ENCODE measurements at regions of chr9 and their contacts with region 1.

Region 1: GRCh38 chr9:17063535-17064135 is 71.2 kb upstream of the CNTLN start:
- DNase-seq: peak; percentile 61
- H3K4me3 ChIP-seq: no peak overlapping the region
- H3K27ac ChIP-seq: no peak overlapping the region
- H3K4me1 ChIP-seq: peaks cover 15% of the 10 kb centered on the region
- H3K27me3 ChIP-seq: no peaks in the 10 kb centered on the region
- CTCF ChIP-seq: peak; percentile 65 to 72
- POLR2A ChIP-seq: no peak

Region 2: GRCh38 chr9:17052626-17053025 is 11.0 kb before region 1 on chr9:
- CTCF ChIA-PET with region 1: interaction called, 16 read pairs
- POLR2A ChIA-PET with region 1: no interaction called
- dilution Hi-C with region 1: no loop called
- intact Hi-C with region 1: no loop called
- DNase-seq: no peak
- H3K4me3 ChIP-seq: no peak overlapping the region
- H3K27ac ChIP-seq: no peak overlapping the region
- H3K4me1 ChIP-seq: no peaks in the 10 kb centered on the region
- H3K27me3 ChIP-seq: no peaks in the 10 kb centered on the region
- CTCF ChIP-seq: no peak
- POLR2A ChIP-seq: no peak

Region 3: DNA sequence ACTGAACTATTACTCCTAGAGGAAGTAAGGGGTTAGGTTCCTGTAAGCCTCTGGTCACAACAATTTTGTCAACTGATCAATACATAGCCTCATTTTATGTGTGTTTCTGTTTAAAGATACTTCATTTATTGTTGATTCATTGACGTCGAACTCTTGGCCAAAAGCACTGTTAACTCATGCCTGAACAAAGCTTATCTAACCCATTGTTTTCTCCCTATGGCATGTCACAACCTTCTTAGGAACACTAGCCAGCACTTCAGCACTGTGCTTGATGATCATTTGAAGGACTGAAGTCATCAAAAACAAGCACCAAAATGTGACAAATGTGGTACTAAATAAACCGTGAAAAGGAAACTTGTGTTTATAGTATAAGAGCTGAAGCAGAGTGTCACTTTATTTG is 84.7 kb after region 1 on chr9:
- CTCF ChIA-PET with region 1: no interaction called
- POLR2A ChIA-PET with region 1: no interaction called
- dilution Hi-C with region 1: no loop called
- intact Hi-C with region 1: no loop called
- DNase-seq: no peak
- H3K4me3 ChIP-seq: no peak overlapping the region
- H3K27ac ChIP-seq: no peak overlapping the region
- H3K4me1 ChIP-seq: no peaks in the 10 kb centered on the region
- H3K27me3 ChIP-seq: no peaks in the 10 kb centered on the region
- CTCF ChIP-seq: no peak
- POLR2A ChIP-seq: no peak

Region 4: GRCh38 chr9:17291766-17292165 is 228.1 kb after region 1 on chr9:
- CTCF ChIA-PET with region 1: no interaction called
- POLR2A ChIA-PET with region 1: no interaction called
- dilution Hi-C with region 1: no loop called
- intact Hi-C with region 1: no loop called
- DNase-seq: no peak
- H3K4me3 ChIP-seq: no peak overlapping the region
- H3K27ac ChIP-seq: no peak overlapping the region
- H3K4me1 ChIP-seq: no peaks in the 10 kb centered on the region
- H3K27me3 ChIP-seq: no peaks in the 10 kb centered on the region
- CTCF ChIP-seq: no peak
- POLR2A ChIP-seq: no peak

Region 5: GRCh38 chr9:17402309-17402708 is 338.7 kb after region 1 on chr9:
- CTCF ChIA-PET with region 1: interaction called, 12 read pairs
- POLR2A ChIA-PET with region 1: no interaction called
- dilution Hi-C with region 1: no loop called
- intact Hi-C with region 1: loop called (anchors 5 kb)
- DNase-seq: peak; percentile 29
- H3K4me3 ChIP-seq: no peak overlapping the region
- H3K27ac ChIP-seq: no peak overlapping the region
- H3K4me1 ChIP-seq: peaks cover 8% of the 10 kb centered on the region
- H3K27me3 ChIP-seq: no peaks in the 10 kb centered on the region
- CTCF ChIP-seq: no peak
- POLR2A ChIP-seq: no peak

Region 6: DNA sequence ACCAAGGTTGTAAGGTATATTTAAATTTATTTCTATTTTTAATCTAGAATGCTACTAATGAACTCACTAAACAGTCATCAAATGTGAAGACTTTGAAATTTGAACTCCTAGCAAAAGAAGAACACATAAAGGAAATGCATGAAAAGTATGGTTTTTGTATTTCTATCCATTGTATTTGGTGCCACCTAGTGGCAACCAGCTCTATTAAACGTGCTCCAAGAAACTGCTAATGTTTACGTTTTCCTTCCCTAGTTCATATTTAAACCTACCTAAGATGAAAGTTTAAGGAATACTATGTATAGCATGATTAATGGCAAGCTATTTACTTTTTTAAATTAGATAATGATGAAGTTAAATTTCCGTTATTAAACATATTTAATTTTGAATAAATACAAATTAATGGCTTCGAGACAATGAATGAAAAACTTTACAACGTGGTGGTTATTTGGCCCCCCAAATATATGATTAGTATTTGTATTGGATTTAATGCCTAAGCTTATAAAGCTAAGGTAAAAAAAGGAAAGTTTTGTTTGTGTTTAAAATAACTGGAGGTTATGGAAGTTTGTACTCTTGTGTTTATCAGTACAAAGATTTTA is 399.3 kb after region 1 on chr9:
- CTCF ChIA-PET with region 1: interaction called, 69 read pairs
- POLR2A ChIA-PET with region 1: no interaction called
- dilution Hi-C with region 1: no loop called
- intact Hi-C with region 1: loop called (anchors 1 kb)
- DNase-seq: peak; percentile 68
- H3K4me3 ChIP-seq: no peak overlapping the region
- H3K27ac ChIP-seq: no peak overlapping the region
- H3K4me1 ChIP-seq: no peaks in the 10 kb centered on the region
- H3K27me3 ChIP-seq: no peaks in the 10 kb centered on the region
- CTCF ChIP-seq: peak; percentile 43 to 54
- POLR2A ChIP-seq: no peak

Measured in endothelial cell of umbilical vein (primary cell).